MCF 10A (cell line): ENCODE measurements at regions of chr4 and their contacts with region 1.

Region 1: DNA sequence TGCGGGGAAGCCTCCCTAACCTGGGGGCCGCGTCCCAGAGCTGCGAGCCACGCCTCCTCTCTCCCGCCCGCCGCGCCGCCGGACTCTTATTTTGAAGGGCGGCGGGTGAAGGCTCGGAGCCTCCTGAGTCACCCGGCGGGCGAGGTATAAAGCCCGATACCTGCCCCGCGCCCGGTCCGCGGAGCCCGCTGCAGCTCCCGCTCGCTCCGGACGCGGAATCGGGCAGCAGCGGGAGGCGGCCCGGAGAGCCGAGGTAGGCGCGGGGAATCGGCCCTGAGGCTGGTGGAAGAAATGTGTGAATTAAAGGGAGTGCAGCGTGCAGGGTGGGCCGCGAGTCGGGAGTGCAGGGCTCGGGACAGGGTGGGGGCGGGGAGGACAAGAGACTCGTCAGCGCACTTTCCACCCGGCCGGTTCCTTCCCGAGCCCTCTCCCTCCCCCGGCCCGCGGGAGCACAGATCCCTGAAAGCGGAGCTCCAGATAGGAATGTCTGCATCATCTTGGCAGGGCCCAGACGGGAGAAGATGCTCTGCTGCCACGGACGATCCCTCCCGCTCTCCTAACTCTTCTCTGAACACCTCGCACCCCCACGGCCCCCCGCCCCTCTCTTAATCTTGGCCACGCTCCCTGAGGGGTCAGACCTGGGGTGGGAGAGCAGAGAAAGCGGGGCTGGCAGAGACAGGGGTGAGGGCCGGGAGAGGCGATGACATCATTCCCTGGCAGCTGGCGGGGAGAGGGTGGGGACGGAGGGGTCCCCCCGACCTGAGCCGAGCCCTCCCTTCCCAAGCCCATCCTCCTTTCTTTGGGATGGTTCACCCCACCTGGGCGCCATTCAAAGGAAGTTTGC is 177.9 kb downstream of the CBR4 start:
- DNase-seq: peak; percentile 85
- H3K4me3 Mint-ChIP-seq: peak overlapping the region; percentile 93
- H3K27ac Mint-ChIP-seq: peak overlapping the region; percentile 97
- H3K4me1 Mint-ChIP-seq: peaks cover 24% of the 10 kb centered on the region
- H3K27me3 Mint-ChIP-seq: no peaks in the 10 kb centered on the region
- CTCF ChIP-seq: no peak

Region 2: DNA sequence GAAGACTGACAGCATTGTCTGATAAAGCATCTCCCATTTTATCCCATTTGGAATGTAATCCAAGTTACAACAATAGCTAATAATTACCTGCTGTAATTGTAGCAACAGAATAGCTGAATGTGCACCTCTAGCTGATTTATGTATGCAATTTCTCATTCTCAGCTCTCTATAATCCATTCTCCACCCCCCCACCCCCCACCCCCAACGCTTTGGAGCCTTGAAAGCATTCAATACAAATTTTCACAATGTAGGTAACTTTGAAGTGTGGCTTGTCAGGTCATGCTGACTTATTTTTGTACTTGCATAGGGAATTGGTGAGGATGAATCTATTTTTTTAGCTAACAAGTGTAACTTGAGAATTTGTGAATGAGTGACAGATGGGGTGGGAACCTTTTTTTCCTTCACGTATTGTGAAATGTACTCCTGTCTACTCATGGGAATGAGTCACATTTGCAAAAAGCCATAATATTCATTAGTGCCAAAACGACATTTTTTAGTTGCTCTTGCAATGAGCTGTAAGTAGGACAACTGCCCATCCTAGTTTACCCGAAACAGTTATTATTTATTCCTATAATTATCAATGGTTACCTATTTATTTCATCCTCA is 176.0 kb before region 1 on chr4:
- CTCF ChIA-PET with region 1: interaction called, 5 read pairs
- POLR2A ChIA-PET with region 1: interaction called, 10 read pairs
- intact Hi-C with region 1: no loop called
- DNase-seq: peak; percentile 92
- H3K4me3 Mint-ChIP-seq: no peak overlapping the region
- H3K27ac Mint-ChIP-seq: peak overlapping the region; percentile 49
- H3K4me1 Mint-ChIP-seq: peaks cover 34% of the 10 kb centered on the region
- H3K27me3 Mint-ChIP-seq: no peaks in the 10 kb centered on the region
- CTCF ChIP-seq: no peak

Region 3: DNA sequence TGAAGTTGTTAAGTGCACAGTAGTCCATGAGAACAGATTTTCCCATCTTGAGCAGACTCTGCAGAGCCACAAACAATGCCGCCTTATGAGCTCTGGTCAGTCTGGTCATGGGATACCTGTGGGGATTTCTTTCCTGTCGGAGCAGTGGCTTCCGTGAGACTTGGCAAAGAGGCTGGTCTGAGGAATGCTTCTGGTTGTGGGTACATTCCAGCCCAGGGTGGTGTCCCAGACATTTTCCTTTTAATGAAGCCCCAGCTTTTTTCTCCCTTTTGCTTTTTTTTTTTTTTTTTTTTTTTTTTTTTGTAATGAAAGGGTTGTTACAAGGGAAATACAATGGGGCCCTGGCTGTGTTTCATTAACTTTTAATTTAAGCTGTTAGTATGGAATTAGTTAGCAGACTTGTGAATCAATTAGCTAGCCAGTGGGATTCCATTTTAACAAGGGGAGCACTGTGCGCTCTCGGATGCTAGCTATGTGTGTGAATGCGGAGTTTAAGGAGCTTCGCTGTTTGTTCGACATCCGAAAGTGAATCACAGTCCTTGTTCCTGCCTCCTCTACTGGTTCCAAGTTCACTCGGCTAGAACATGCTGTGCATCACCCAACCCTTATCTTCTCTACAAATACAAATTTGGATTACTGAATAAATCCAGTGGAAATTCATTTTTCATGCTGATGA is 47.2 kb before region 1 on chr4:
- CTCF ChIA-PET with region 1: no interaction called
- POLR2A ChIA-PET with region 1: interaction called, 12 read pairs
- intact Hi-C with region 1: no loop called
- DNase-seq: peak; percentile 38
- H3K4me3 Mint-ChIP-seq: peak overlapping the region; percentile 33
- H3K27ac Mint-ChIP-seq: peak overlapping the region; percentile 28
- H3K4me1 Mint-ChIP-seq: peaks cover 18% of the 10 kb centered on the region
- H3K27me3 Mint-ChIP-seq: no peaks in the 10 kb centered on the region
- CTCF ChIP-seq: no peak

Region 4: GRCh38 chr4:168815379-168816345 is 16.5 kb before region 1 on chr4:
- CTCF ChIA-PET with region 1: interaction called, 36 read pairs
- POLR2A ChIA-PET with region 1: interaction called, 265 read pairs
- intact Hi-C with region 1: loop called (anchors 1 kb)
- DNase-seq: no peak
- H3K4me3 Mint-ChIP-seq: no peak overlapping the region
- H3K27ac Mint-ChIP-seq: peak overlapping the region; percentile 70
- H3K4me1 Mint-ChIP-seq: peaks cover 29% of the 10 kb centered on the region
- H3K27me3 Mint-ChIP-seq: no peaks in the 10 kb centered on the region
- CTCF ChIP-seq: no peak

Region 5: GRCh38 chr4:168917138-168917779 is 85.1 kb after region 1 on chr4:
- CTCF ChIA-PET with region 1: interaction called, 5 read pairs
- POLR2A ChIA-PET with region 1: interaction called, 6 read pairs
- intact Hi-C with region 1: loop called (anchors 2 kb)
- DNase-seq: peak; percentile 64
- H3K4me3 Mint-ChIP-seq: no peak overlapping the region
- H3K27ac Mint-ChIP-seq: no peak overlapping the region
- H3K4me1 Mint-ChIP-seq: peaks cover 5% of the 10 kb centered on the region
- H3K27me3 Mint-ChIP-seq: no peaks in the 10 kb centered on the region
- CTCF ChIP-seq: peak; percentile 52